ENCODE measurements at regions of chr2 and their contacts with region 1.

Region 1: DNA sequence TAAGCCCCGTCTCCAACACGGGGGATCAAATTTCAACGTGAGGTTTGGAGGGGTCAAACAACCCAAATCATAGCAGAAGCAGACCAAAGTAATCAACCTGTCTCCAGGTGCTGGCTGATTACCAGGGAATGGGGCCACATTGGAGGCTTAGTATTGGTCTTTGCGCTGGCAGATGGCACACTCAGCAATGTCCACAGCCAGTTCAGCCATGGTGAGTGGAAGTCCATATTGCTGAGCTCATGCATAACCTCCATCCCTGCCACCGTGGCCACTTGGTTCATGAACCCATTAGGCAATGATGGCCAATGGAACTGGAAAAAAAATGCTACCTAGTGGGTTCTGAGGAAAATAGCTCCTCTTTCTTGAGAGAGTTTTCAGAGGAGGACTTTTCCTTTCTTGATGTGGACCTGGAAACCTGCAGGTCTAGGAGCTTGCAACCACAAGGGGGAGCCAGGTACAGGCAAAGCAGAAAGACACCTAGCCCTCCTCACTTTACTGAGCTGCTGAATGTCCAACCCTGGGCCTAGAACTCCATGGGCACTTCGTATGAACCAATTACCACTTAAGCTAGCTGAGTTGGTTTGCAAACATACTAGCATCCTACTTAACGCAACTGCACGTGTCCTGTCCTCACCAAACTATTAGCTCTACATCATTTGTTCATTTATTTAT is 128.0 kb upstream of the GYPC start:
- DNase-seq: peak; percentile 61 to 72
- H3K4me3 ChIP-seq: no peak overlapping the region
- H3K27ac ChIP-seq: no peak overlapping the region
- H3K4me1 ChIP-seq: no peaks in the 10 kb centered on the region
- H3K27me3 ChIP-seq: no peaks in the 10 kb centered on the region
- CTCF ChIP-seq: peak in 5 of 7 experiments; percentile 26 to 45 (median 37)
- EP300 ChIP-seq: no peak
- POLR2A ChIP-seq: no peak

Region 2: GRCh38 chr2:126154256-126154785 is 373.7 kb before region 1 on chr2:
- intact Hi-C with region 1: no loop called
- DNase-seq: no peak
- H3K4me3 ChIP-seq: no peak overlapping the region
- H3K27ac ChIP-seq: no peak overlapping the region
- H3K4me1 ChIP-seq: no peaks in the 10 kb centered on the region
- H3K27me3 ChIP-seq: no peaks in the 10 kb centered on the region
- CTCF ChIP-seq: no peak
- EP300 ChIP-seq: no peak
- POLR2A ChIP-seq: no peak

Region 3: DNA sequence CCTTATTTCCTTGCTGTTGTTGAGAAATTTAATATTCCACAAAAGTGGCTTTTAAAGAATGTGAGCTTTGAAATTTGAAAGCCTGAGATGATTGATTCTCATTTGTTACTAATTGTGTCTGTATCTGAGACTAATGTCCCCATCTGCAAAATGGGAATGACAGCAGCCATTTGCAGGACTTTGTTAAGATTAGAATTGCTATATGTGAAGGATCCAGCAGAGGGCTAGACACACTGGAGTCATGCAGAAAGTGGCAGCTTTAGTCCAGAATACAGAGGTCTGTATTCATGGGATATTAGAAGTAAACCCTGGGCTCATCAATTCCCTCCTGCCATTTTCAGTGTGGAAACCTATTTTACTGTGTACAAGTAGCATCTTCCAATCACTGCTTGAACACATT is 168.5 kb before region 1 on chr2:
- intact Hi-C with region 1: no loop called
- DNase-seq: no peak
- H3K4me3 ChIP-seq: no peak overlapping the region
- H3K27ac ChIP-seq: no peak overlapping the region
- H3K4me1 ChIP-seq: no peaks in the 10 kb centered on the region
- H3K27me3 ChIP-seq: no peaks in the 10 kb centered on the region
- CTCF ChIP-seq: no peak
- EP300 ChIP-seq: no peak
- POLR2A ChIP-seq: no peak

Region 4: GRCh38 chr2:126381091-126381490 is 146.9 kb before region 1 on chr2:
- intact Hi-C with region 1: no loop called
- DNase-seq: peak in 1 of 2 donors; percentile 16
- H3K4me3 ChIP-seq: no peak overlapping the region
- H3K27ac ChIP-seq: no peak overlapping the region
- H3K4me1 ChIP-seq: no peaks in the 10 kb centered on the region
- H3K27me3 ChIP-seq: no peaks in the 10 kb centered on the region
- CTCF ChIP-seq: no peak
- EP300 ChIP-seq: no peak
- POLR2A ChIP-seq: no peak

Region 5: GRCh38 chr2:126784028-126784427 is 256.1 kb after region 1 on chr2:
- intact Hi-C with region 1: loop called (anchors 5 kb)
- DNase-seq: no peak
- H3K4me3 ChIP-seq: no peak overlapping the region
- H3K27ac ChIP-seq: no peak overlapping the region
- H3K4me1 ChIP-seq: no peaks in the 10 kb centered on the region
- H3K27me3 ChIP-seq: peaks cover 0 to 8% (median 7%) of the 10 kb centered on the region in 3 donors
- CTCF ChIP-seq: no peak
- EP300 ChIP-seq: no peak
- POLR2A ChIP-seq: no peak